ENCODE measurements at regions of chr12 and their contacts with region 1.

Region 1: DNA sequence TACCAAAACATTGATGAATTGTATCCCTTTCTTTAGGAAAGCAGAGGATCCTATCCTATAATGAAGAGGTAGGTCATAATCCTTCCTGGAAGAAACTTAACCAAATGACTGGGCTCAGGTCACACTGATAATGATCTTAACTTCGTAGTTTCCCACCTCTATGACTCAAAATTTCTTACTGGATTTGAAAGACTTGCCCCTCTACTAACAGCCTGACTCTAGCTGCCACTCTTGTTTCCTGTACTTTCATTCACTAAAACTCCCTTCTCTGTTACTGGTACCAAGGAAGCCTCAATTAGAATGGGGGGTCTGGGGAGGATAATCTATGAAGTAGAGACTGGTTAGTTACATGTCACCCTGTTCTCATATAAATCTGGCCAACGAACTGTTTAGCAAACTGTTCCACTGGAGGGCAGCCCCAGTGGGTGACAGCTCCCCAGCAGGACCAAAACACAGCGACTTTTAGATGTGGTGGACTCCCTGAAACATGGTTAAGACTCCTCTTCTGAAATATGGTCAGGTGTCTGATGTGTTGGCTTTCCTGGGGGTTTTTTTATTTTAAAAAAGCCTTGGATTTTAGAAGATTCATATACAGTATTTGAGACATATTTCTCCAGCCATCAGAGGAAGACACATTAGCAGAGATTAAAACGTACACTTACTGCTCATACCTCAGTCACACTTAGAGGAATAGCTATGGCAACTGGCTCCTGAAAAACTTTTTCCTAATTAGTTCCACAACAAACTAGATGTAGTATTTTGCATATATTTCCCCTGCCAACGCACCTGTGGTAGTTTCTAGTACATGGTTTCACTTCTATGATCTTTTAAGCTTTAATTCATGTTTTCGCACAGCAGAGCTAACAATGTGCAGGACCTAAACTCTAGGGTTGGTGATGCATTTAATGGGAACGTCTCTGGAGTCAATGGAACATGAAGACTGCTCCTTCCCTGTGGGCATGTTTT is 72.3 kb downstream of the ACADS start:
- DNase-seq: no peak
- ATAC-seq: no peak
- H3K4me3 ChIP-seq: no peak overlapping the region
- H3K27ac ChIP-seq: no peak overlapping the region
- H3K4me1 ChIP-seq: no peaks in the 10 kb centered on the region
- H3K27me3 ChIP-seq: no peaks in the 10 kb centered on the region
- CTCF ChIP-seq: no peak
- POLR2A ChIP-seq: no peak
- RAD21 ChIP-seq: no peak

Region 2: DNA sequence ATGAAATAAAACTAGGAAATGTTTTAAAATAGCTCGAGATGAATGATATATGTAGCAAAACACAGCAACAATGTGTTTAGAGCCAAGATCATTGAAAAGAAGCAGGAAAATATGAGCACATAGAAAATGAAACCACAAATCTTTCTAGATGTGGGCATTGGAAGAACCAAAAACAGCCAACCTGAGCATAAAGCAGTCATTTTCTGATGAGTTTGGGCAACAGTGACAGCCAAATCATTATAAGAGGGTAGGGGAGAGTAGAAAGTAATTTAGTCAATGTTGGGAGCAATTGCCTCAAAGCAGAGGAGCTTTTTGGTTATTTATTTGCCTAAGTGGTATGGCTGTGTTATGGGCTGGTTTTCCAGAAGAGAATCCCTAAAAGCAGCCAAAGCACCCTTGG is 817.7 kb before region 1 on chr12:
- CTCF ChIA-PET with region 1: no interaction called
- POLR2A ChIA-PET with region 1: no interaction called
- dilution Hi-C with region 1: no loop called
- in situ Hi-C with region 1: no loop called
- intact Hi-C with region 1: no loop called
- DNase-seq: no peak
- ATAC-seq: no peak
- H3K4me3 ChIP-seq: no peak overlapping the region
- H3K27ac ChIP-seq: no peak overlapping the region
- H3K4me1 ChIP-seq: no peaks in the 10 kb centered on the region
- H3K27me3 ChIP-seq: peaks cover 4% of the 10 kb centered on the region
- CTCF ChIP-seq: no peak
- POLR2A ChIP-seq: no peak
- RAD21 ChIP-seq: no peak

Region 3: DNA sequence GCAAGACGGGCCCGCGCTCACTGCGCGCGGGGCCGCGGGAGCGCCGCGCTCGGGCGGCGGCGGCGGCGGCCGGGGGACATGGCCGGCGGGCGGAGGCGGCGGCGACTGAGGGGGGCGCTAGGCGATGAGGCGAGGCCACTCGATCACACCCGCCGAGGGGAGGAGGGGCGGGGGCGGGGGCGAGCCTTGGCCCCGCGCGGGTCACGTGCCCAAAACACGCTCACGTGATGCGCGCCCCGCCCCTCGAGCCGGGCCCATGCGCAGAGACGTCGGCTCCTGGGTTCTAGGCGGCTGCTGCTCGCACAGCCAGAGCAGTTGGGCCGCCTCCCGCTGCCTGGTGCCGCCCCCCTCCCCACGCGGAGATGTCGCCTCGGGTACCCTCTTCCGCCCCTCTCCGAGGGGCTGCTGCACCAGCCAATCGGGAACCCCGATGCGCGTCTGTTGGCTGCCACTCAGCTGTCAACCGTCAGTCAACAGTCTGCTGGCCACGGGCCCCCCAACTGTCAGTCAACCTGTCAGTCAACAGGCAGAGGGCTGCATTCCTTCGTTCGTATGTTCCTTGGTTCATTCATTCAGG is 106.3 kb after region 1 on chr12 and contains the start of gene SPPL3:
- CTCF ChIA-PET with region 1: no interaction called
- POLR2A ChIA-PET with region 1: no interaction called
- dilution Hi-C with region 1: no loop called
- in situ Hi-C with region 1: no loop called
- intact Hi-C with region 1: loop called (anchors 10 kb)
- DNase-seq: peak; percentile 73
- ATAC-seq: peak; percentile 88
- H3K4me3 ChIP-seq: peak within 1 kb of the TSS; percentile 61
- H3K27ac ChIP-seq: peak within 1 kb of the TSS; percentile 35
- H3K4me1 ChIP-seq: peaks cover 2% of the 10 kb centered on the region; the same call in 1 of the 2 replicates
- H3K27me3 ChIP-seq: no peaks in the 10 kb centered on the region
- CTCF ChIP-seq: no peak
- POLR2A ChIP-seq: no peak
- RAD21 ChIP-seq: no peak
- total RNA-seq, gene SPPL3: 1.6 and 3.6 TPM in 2 replicates

Measured in IMR-90 (cell line).